ENCODE measurements at regions of chr3 and their contacts with region 1.

Region 1: GRCh38 chr3:36893137-36893557 is 51.7 kb downstream of the TRANK1 start:
- DNase-seq: peak in 2 of 4 experiments; percentile 52 to 60
- ATAC-seq: peak; percentile 84
- H3K4me3 ChIP-seq: no peak overlapping the region
- H3K27ac ChIP-seq: peak overlapping the region; percentile 35; the same call in 1 of the 3 replicates
- H3K4me1 ChIP-seq: peaks cover 0 to 9% of the 10 kb centered on the region in 2 experiments; a peak in 2 of 5 replicates
- H3K27me3 ChIP-seq: no peaks in the 10 kb centered on the region
- CTCF ChIP-seq: no peak
- EP300 ChIP-seq: no peak
- POLR2A ChIP-seq: no peak
- RAD21 ChIP-seq: no peak

Region 2: GRCh38 chr3:36904641-36905040 is 11.5 kb after region 1 on chr3:
- CTCF ChIA-PET with region 1: no interaction called
- POLR2A ChIA-PET with region 1: interaction called, 12 read pairs
- in situ Hi-C with region 1: no loop called
- intact Hi-C with region 1: no loop called
- DNase-seq: peak in 2 of 4 experiments; percentile 58 to 68
- ATAC-seq: peak; percentile 80
- H3K4me3 ChIP-seq: no peak overlapping the region
- H3K27ac ChIP-seq: no peak overlapping the region
- H3K4me1 ChIP-seq: peaks cover 25 to 34% of the 10 kb centered on the region in 2 experiments
- H3K27me3 ChIP-seq: no peaks in the 10 kb centered on the region
- CTCF ChIP-seq: peak; percentile 69 to 77 (median 69)
- EP300 ChIP-seq: no peak
- POLR2A ChIP-seq: no peak
- RAD21 ChIP-seq: peak; percentile 54 to 86

Region 3: GRCh38 chr3:37479981-37480380 is 586.8 kb after region 1 on chr3:
- CTCF ChIA-PET with region 1: no interaction called
- POLR2A ChIA-PET with region 1: no interaction called
- in situ Hi-C with region 1: no loop called
- intact Hi-C with region 1: no loop called
- DNase-seq: no peak
- ATAC-seq: no peak
- H3K4me3 ChIP-seq: no peak overlapping the region
- H3K27ac ChIP-seq: no peak overlapping the region
- H3K4me1 ChIP-seq: no peaks in the 10 kb centered on the region
- H3K27me3 ChIP-seq: peaks cover 7 to 43% of the 10 kb centered on the region in 2 experiments; a peak in 4 of 5 replicates
- CTCF ChIP-seq: no peak
- EP300 ChIP-seq: no peak
- POLR2A ChIP-seq: no peak
- RAD21 ChIP-seq: no peak